ENCODE measurements at regions of chr10 and their contacts with region 1.

Region 1: GRCh38 chr10:89029785-89030437 is 39.3 kb downstream of the FAS start:
- DNase-seq: peak; percentile 59
- H3K4me3 ChIP-seq: no peak overlapping the region
- H3K27ac ChIP-seq: no peak overlapping the region
- H3K27me3 ChIP-seq: no peaks in the 10 kb centered on the region
- CTCF ChIP-seq: peak; percentile 85

Region 2: GRCh38 chr10:88996927-88997326 is 33.0 kb before region 1 on chr10:
- CTCF ChIA-PET with region 1: interaction called, 21 read pairs
- POLR2A ChIA-PET with region 1: no interaction called
- DNase-seq: no peak
- H3K4me3 ChIP-seq: no peak overlapping the region
- H3K27ac ChIP-seq: no peak overlapping the region
- H3K27me3 ChIP-seq: no peaks in the 10 kb centered on the region
- CTCF ChIP-seq: no peak

Region 3: GRCh38 chr10:89007129-89007893 is 22.6 kb before region 1 on chr10:
- CTCF ChIA-PET with region 1: interaction called, 22 read pairs
- POLR2A ChIA-PET with region 1: no interaction called
- DNase-seq: no peak
- H3K4me3 ChIP-seq: no peak overlapping the region
- H3K27ac ChIP-seq: no peak overlapping the region
- H3K27me3 ChIP-seq: no peaks in the 10 kb centered on the region
- CTCF ChIP-seq: no peak

Region 4: GRCh38 chr10:89055159-89055558 is 25.2 kb after region 1 on chr10:
- CTCF ChIA-PET with region 1: interaction called, 17 read pairs
- POLR2A ChIA-PET with region 1: no interaction called
- DNase-seq: no peak
- H3K4me3 ChIP-seq: no peak overlapping the region
- H3K27ac ChIP-seq: no peak overlapping the region
- H3K27me3 ChIP-seq: no peaks in the 10 kb centered on the region
- CTCF ChIP-seq: no peak

Region 5: GRCh38 chr10:89207181-89207800 is 177.4 kb after region 1 on chr10 and contains the start of gene CH25H:
- CTCF ChIA-PET with region 1: interaction called, 109 read pairs
- POLR2A ChIA-PET with region 1: interaction called, 4 read pairs
- DNase-seq: no peak
- H3K4me3 ChIP-seq: peak within 1 kb of the TSS; percentile 61
- H3K27ac ChIP-seq: peak within 1 kb of the TSS; percentile 34
- H3K27me3 ChIP-seq: no peaks in the 10 kb centered on the region
- CTCF ChIP-seq: no peak
- polyA plus RNA-seq, gene CH25H: 0.71 and 1.1 TPM in 2 replicates

Measured in AG04450 (cell line).